GM12878 (cell line): ENCODE measurements at regions of chr1 and their contacts with region 1.

Region 1: DNA sequence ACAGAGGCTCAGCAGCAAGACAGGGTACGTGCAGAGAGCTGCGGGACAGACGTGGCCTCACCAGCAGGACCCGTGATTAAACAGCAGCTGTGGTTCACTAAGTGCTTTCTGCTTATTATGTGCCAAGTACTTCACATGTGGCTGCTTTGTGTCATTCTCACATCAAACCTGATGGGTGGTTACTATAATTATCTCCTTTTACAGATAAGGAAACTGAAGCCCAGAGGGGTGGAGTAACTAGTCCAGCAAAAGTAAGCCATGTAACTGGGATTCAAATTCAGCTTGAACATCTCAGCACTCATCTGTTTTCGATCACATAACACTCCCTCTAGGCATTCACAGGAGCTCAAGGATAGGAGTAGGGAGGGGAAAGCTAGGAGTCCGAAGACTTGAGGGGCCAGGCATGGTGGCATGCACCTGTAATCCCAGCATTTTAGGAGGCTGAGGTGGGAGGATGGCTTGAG is 50.8 kb upstream of the CLIC4 start:
- DNase-seq: peak; percentile 79
- ATAC-seq: peak; percentile 94
- H3K4me3 ChIP-seq: no peak overlapping the region
- H3K27ac ChIP-seq: peak overlapping the region; percentile 43; the same call in 1 of the 2 replicates
- H3K4me1 ChIP-seq: peaks cover 27% of the 10 kb centered on the region
- H3K27me3 ChIP-seq: no peaks in the 10 kb centered on the region
- CTCF ChIP-seq: no peak
- EP300 ChIP-seq: peak; percentile 35 to 71; a peak in 3 of 4 replicates
- POLR2A ChIP-seq: peak; percentile 58
- RAD21 ChIP-seq: no peak

Region 2: DNA sequence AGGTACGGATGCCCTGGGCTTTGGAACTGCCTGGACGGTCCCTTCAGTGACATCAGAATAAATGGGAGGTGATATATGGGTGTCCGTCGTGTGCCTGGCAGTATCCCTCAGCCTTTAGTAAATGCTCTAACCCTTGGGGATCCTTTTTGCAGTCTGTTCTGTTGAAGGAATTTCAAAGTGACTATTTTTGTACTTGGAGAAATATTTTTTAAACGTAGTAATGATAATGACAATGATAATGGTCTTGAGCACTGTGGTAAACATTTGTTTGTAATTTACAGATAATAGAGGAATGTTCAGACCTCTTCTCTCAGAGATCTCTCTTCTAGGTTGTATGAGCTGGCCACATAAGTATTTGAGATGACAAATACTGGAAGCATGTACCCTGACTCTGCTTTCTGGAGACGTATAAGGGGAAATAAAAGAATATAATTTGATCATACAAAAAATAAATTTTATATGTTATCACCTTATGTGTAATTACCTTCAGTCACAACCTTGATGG is 93.3 kb before region 1 on chr1:
- CTCF ChIA-PET with region 1: no interaction called
- POLR2A ChIA-PET with region 1: no interaction called
- RAD21 ChIA-PET with region 1: no interaction called
- SMC1A ChIA-PET with region 1: no interaction called
- in situ Hi-C with region 1: no loop called
- intact Hi-C with region 1: no loop called
- DNase-seq: no peak
- ATAC-seq: no peak
- H3K4me3 ChIP-seq: no peak overlapping the region
- H3K27ac ChIP-seq: no peak overlapping the region
- H3K4me1 ChIP-seq: no peaks in the 10 kb centered on the region
- H3K27me3 ChIP-seq: no peaks in the 10 kb centered on the region; a peak in 1 of 4 replicates
- CTCF ChIP-seq: no peak
- EP300 ChIP-seq: no peak
- POLR2A ChIP-seq: no peak
- RAD21 ChIP-seq: no peak

Region 3: DNA sequence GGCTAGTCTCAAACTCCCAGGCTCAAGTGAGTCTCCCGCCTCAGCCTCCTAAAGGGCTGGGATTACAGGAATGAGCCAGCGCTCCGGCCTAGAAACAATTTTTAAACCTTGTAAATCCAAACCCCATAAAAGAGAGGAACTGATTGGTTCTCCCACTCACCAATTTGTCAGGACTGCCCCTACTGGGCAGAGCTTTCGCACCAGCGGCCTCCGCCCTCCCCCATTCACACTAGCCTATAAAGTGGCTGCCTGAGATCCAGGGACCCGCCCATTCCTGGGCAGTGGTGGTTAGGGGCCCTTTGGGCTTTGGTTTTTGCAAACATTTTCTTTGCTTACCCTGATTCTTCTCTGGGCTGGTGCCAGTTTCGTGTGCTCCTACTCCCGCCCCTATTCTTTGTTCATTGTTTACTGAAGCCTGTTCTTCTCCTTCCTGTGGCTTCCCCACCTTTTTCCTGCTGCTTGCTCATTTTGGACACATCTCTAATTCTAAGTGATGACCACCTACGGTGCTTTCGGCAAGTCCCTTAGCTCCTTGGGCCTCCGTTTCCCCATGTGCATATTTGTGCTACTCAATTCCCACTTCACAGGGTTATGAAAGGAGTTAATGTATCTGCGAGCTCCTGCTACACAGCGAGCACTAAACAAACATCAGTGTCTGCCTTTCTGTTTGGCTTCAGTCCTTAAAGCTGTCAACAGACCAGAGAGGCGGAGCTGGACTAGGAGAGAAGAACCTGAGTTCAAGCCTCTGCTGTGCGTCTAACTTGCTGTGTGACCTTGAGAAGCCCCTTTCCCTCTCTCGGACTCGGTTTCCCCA is 11.1 kb after region 1 on chr1:
- CTCF ChIA-PET with region 1: no interaction called
- POLR2A ChIA-PET with region 1: interaction called, 4 read pairs
- RAD21 ChIA-PET with region 1: interaction called, 10 read pairs
- SMC1A ChIA-PET with region 1: interaction called, 26 read pairs
- in situ Hi-C with region 1: no loop called
- intact Hi-C with region 1: no loop called
- DNase-seq: peak; percentile 82
- ATAC-seq: peak; percentile 99
- H3K4me3 ChIP-seq: peak overlapping the region; percentile 8; the same call in 1 of the 2 replicates
- H3K27ac ChIP-seq: no peak overlapping the region
- H3K4me1 ChIP-seq: peaks cover 3% of the 10 kb centered on the region
- H3K27me3 ChIP-seq: no peaks in the 10 kb centered on the region
- CTCF ChIP-seq: no peak
- EP300 ChIP-seq: no peak
- POLR2A ChIP-seq: no peak
- RAD21 ChIP-seq: no peak

Region 4: DNA sequence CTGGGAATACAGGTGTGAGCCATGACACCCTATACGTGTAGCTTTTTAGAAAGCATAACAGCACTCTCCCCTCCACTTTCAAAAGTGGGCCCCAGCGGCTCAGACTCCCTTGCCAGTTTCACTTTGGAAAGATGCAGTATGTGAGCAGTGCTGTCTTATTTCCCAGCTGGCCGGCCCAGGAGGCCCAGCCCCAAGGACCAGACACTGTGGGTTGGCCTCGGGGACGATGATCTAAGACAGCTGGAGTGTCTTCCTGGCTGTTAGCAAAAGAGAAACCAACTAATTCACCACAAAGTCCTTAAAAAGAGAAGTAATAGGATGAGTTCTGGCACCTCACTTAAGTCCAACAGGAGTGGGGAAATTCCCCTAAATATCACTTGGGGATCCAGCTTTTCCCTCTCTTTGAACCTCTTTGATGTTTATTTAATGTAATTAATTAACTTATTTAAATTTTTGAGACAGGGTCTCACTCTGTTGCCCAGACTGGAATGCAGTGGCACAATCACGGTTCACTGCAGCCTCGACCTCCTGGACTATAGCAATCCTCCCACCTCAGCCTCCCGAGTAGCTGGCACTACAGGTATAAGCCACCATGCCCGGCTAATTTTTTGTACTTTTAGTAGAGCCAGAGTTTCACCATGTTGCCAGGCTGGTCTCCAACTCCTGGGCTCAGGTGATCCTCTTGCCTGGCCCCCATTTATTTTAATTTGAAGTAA is 33.2 kb after region 1 on chr1:
- CTCF ChIA-PET with region 1: interaction called, 24 read pairs
- POLR2A ChIA-PET with region 1: interaction called, 9 read pairs
- RAD21 ChIA-PET with region 1: interaction called, 19 read pairs
- SMC1A ChIA-PET with region 1: interaction called, 28 read pairs
- in situ Hi-C with region 1: no loop called
- intact Hi-C with region 1: no loop called
- DNase-seq: peak; percentile 71
- ATAC-seq: peak; percentile 98
- H3K4me3 ChIP-seq: peak overlapping the region; percentile 23; the same call in 1 of the 2 replicates
- H3K27ac ChIP-seq: peak overlapping the region; percentile 52
- H3K4me1 ChIP-seq: peaks cover 23% of the 10 kb centered on the region
- H3K27me3 ChIP-seq: no peaks in the 10 kb centered on the region
- CTCF ChIP-seq: no peak
- EP300 ChIP-seq: no peak
- POLR2A ChIP-seq: no peak
- RAD21 ChIP-seq: no peak

Region 5: GRCh38 chr1:24735509-24736375 is 41.3 kb after region 1 on chr1:
- CTCF ChIA-PET with region 1: interaction called, 24 read pairs
- POLR2A ChIA-PET with region 1: interaction called, 9 read pairs
- RAD21 ChIA-PET with region 1: interaction called, 19 read pairs
- SMC1A ChIA-PET with region 1: interaction called, 93 read pairs
- in situ Hi-C with region 1: no loop called
- intact Hi-C with region 1: no loop called
- DNase-seq: no peak
- ATAC-seq: no peak
- H3K4me3 ChIP-seq: no peak overlapping the region
- H3K27ac ChIP-seq: peak overlapping the region; percentile 33; the same call in 1 of the 2 replicates
- H3K4me1 ChIP-seq: peaks cover 38% of the 10 kb centered on the region
- H3K27me3 ChIP-seq: no peaks in the 10 kb centered on the region
- CTCF ChIP-seq: no peak
- EP300 ChIP-seq: no peak
- POLR2A ChIP-seq: no peak
- RAD21 ChIP-seq: no peak

Region 6: GRCh38 chr1:24754229-24754628 is 59.8 kb after region 1 on chr1:
- CTCF ChIA-PET with region 1: interaction called, 18 read pairs
- POLR2A ChIA-PET with region 1: interaction called, 4 read pairs
- RAD21 ChIA-PET with region 1: interaction called, 17 read pairs
- SMC1A ChIA-PET with region 1: interaction called, 19 read pairs
- in situ Hi-C with region 1: no loop called
- intact Hi-C with region 1: loop called (anchors 2 kb)
- DNase-seq: no peak
- ATAC-seq: no peak
- H3K4me3 ChIP-seq: no peak overlapping the region
- H3K27ac ChIP-seq: no peak overlapping the region
- H3K4me1 ChIP-seq: peaks cover 7% of the 10 kb centered on the region; the same call in 1 of the 2 replicates
- H3K27me3 ChIP-seq: no peaks in the 10 kb centered on the region
- CTCF ChIP-seq: no peak
- EP300 ChIP-seq: no peak
- POLR2A ChIP-seq: no peak
- RAD21 ChIP-seq: no peak